Posterior vena cava (tissue), 2 donors: ENCODE measurements at regions of chr7 and their contacts with region 1.

Region 1: GRCh38 chr7:109235316-109235715 is 665.6 kb downstream of the DNAJB9 start:
- DNase-seq: no peak

Region 2: DNA sequence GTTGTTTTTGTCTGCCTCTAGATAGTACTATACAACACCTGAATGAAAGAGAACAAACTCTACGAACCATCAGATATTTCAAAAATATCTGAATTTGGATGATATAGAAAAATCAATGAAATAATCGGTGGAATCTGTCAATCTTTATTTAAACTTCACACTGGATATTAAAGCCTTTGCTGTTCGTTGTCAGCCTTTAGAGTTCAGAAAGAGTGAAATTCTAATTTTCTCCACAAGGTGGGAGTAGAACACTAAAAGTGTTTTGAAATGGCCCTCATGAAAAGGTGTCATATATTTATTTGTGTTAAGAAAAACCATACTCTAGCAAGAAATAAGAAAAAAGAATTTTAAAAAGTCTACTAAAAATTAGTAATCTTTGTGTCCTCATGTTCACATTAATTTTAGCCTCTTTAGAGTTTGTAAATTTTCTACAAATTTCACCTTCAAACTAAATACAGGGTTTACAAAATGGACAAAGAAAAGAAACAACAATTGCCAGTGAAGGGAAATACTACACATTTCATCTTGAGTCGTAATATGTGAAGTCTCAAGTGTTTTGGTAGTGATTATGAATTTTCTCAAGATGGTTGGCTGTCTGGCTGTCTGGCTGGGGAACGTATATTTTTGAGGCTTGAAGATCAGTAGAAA is 622.1 kb before region 1 on chr7:
- intact Hi-C with region 1: loop called in 1 of 2 experiments (anchors 10 kb)
- DNase-seq: no peak